Thyroid gland (tissue), 4 donors: ENCODE measurements at regions of chr17 and their contacts with region 1.

Region 1: GRCh38 chr17:75524953-75525719 is at the start of gene LLGL2:
- DNase-seq: peak; percentile 89 to 91
- H3K4me3 ChIP-seq: peak within 1 kb of the TSS; percentile 53 to 82 (median 61)
- H3K27ac ChIP-seq: peak within 1 kb of the TSS; percentile 69 to 86 (median 80)
- H3K4me1 ChIP-seq: peaks cover 16 to 25% of the 10 kb centered on the region in 2 donors
- H3K27me3 ChIP-seq: no peaks in the 10 kb centered on the region
- CTCF ChIP-seq: peak in 3 of 6 experiments; percentile 30 to 55 (median 51)
- POLR2A ChIP-seq: peak in 1 of 2 donors; percentile 93
- total RNA-seq, gene LLGL2: 35.6 to 73.5 (median 53.8) TPM

Region 2: DNA sequence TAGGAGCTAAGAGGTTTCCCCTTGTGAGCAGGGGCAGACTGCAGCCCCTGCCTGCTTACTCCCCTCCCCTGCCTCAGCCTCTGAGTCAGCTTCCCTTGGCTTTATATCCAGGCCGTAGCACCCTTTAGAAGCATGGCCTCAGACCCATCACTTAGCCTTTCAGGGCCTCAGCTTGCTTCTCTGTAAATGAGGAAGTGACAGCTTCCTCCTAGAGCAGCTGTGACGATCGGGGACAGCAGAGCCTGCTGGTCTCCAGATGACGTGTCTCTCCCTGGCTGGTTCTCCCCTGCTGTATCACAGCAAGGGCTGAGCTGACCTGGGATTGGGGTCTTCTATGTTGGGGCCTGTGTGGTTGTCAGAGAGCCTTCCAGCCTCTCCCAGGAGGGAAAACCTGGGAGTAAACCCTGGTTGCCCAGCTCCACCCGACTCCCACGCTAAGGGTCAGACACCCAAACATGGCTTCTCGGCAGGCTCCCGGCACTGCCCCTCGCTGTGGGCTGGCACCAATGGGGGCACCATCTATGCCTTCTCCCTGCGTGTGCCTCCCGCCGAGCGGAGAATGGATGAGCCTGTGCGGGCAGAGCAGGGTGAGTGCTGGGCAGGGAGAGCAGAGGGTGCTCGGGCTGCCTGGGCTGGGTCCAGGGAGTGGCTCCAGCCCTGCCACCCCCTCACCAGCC is 46.2 kb after region 1 on chr17:
- intact Hi-C with region 1: no loop called
- DNase-seq: no peak
- H3K4me3 ChIP-seq: no peak overlapping the region
- H3K27ac ChIP-seq: no peak overlapping the region
- H3K4me1 ChIP-seq: peaks cover 5 to 10% of the 10 kb centered on the region in 2 donors
- H3K27me3 ChIP-seq: no peaks in the 10 kb centered on the region
- CTCF ChIP-seq: no peak
- POLR2A ChIP-seq: no peak

Region 3: DNA sequence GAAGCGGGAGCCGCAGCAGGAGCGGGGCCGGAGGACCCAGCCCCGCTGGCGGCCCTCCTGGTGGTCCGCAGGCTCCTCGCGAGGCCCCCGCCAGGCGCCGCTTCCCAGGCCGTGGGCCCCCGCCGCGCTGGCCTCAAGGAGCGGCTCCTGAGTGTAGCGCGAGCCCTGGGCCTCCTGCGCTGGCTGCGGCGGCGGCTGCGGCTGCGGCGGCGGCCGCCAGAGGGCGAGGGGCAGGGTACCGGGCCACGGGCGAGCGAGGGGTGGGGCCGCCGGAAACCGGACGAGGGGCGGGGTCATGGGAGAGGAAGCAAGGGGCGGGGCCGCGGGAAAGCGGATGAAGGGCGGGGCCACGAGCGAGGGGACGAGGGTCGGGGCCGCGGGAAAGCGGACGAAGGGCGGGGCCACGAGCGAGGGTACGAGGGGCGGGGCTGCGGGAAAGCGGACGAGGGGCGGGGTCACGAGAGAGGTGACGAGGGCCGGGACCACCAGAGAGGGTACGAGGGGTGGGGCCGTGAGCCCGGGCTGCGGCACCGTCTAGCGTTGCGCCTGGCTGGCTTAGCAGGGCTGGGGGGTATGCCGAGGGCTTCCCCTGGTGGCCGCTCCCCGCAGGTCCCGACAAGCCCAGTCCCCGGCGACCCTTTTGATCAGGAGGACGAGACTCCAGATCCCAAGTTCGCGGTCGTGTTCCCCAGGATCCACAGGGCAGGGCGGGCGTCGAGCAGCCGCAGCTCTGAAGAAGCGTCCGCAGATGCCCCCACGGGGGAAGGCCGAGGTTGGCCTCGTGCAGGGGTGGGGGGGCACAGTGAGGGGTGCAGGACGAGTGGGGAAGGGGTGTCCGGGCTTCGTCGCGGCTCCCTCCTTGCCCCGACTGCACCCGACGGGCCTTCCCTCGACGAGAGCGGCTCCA is 64.1 kb after region 1 on chr17:
- intact Hi-C with region 1: loop called (anchors 5 kb)
- DNase-seq: peak; percentile 95 to 96
- H3K4me3 ChIP-seq: peak overlapping the region; percentile 53 to 67 (median 58)
- H3K27ac ChIP-seq: peak overlapping the region; percentile 92 to 97 (median 97)
- H3K4me1 ChIP-seq: peaks cover 7 to 15% of the 10 kb centered on the region in 2 donors
- H3K27me3 ChIP-seq: no peaks in the 10 kb centered on the region
- CTCF ChIP-seq: peak; percentile 21 to 95 (median 67)
- POLR2A ChIP-seq: peak in 1 of 2 donors; percentile 88

Region 4: DNA sequence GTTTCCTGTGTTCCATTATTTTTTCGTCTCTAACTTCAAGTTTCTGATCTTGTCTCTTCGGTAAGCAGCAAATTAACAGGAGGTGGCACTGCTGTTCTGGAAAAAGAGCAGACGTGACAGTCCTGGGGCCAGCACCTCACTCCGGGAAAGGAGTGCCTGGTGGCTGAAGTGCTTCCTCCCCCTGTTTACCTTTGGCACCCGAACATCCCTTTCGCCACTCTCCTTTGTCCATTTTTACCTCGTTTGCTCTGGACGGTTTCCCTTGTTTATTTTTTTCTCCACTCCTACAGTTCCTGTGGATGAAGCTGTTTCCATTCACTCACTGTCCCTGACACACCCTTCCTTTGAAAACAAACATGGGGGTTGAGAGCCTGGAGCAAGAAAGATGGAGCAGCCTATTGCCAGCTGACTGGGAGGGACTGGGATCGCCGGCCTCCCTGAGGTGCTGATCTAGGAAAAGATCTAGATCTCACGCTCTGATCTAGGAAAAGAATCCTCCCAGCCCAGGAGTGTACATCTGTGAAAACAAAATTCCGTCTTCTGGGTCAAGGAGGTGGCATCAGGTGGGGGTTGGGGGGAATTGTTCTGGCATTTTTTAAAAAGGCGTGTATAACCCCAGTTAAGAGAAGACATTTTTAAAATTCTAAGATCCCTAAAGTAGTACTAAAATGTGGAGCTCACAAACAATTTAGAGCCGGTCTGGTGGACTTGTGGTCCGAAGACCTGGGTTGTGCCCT is 154.7 kb after region 1 on chr17:
- intact Hi-C with region 1: no loop called
- DNase-seq: peak; percentile 13 to 32
- H3K4me3 ChIP-seq: no peak overlapping the region
- H3K27ac ChIP-seq: peak overlapping the region in 2 of 3 donors; percentile 49 to 59
- H3K4me1 ChIP-seq: peaks cover 0 to 22% of the 10 kb centered on the region in 2 donors
- H3K27me3 ChIP-seq: no peaks in the 10 kb centered on the region
- CTCF ChIP-seq: peak in 4 of 6 experiments; percentile 11 to 35 (median 24)
- POLR2A ChIP-seq: no peak